ENCODE measurements at regions of chr10 and their contacts with region 1.

Region 1: DNA sequence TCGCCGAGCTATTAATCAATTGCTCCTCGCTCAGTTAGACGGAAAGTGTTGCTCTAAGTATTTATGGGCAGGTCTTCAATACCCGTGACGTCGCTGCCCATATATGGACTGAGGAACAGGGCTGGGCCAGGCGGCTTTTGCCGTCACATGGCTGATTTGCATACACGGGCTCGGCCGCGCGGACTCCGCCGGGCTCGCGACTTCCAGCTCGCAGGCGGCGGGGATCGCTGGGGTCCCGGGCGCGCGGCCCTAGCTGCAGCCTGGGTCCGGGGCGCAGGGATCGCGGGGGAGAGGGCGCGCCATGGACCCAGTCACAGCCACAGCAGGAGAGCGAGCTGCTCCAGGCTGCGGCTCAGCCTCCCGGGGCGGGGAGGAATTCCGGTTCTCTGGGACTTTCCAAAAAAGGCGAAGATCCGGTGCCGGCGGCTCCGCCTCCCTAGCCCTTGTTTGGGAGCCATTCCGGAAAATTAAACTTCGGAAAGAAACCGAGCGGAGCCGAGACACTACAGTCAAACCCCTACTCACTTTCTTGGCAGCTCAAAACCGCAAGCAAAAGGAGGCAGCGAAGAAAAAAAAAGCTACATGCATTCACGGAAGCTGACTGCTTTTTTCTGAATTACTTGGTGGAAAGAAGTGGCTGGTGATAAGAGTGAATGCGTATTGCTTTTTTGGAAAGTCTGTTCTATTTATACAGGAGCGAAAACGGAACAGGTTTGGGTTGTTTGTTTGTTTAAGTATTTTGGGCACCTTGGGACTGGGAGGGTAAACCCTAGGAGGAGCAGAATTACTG is at the start of gene EGR2:
- DNase-seq: peak; percentile 93
- CTCF ChIP-seq: no peak

Region 2: DNA sequence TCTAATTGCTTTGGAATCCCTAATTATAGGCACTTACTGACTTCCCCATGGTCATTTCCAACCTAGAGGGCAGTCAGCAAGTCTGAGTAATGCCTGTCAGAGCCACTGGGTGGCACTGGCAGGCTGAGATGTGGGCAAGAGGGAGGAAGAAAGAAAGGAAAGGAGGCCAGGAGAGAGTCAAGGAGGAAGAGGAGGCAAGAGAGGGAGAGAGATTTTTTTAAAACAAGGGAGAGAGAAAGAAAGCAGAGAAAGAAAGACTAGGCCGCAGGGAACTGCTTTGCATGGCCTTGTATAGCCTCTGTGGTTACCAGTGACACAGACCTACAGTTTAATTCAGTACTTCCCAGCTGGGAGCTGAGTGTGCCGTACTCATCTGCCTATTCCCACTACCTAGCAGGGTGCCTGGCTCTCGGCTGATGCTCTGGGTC is 222.4 kb before region 1 on chr10:
- CTCF ChIA-PET with region 1: interaction called, 59 read pairs
- POLR2A ChIA-PET with region 1: no interaction called
- DNase-seq: peak; percentile 54
- CTCF ChIP-seq: peak; percentile 98

Region 3: DNA sequence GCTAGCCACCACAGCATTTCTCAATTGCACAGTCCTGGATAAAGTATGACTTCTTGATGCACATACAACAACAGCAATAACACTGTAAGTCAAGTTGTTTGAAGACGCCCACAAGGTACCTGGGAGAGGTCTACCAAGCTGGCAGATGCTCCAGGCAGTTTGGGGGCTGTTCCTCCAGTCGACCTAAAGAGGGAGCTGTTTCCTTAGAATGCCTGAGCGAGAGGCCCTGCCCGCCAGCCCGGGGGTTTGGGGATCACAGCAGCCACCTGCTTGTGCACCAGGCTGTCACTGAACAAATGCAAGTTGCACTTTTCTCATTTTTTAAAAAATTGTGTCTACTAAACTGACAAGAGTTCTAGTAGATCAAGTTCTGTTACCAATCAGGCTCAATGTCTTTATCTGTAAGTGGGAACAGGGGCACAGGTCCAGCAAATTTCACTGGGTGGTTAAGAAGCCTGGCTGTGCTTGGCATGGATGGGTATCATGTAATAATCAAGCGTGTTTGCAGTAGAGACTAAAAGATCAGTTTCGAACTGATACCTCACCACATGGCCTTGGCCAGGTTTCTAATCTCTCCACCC is 205.8 kb before region 1 on chr10:
- CTCF ChIA-PET with region 1: interaction called, 239 read pairs
- POLR2A ChIA-PET with region 1: interaction called, 3 read pairs
- DNase-seq: peak; percentile 88
- CTCF ChIP-seq: peak; percentile 86

Region 4: GRCh38 chr10:62732841-62733653 is 83.5 kb before region 1 on chr10:
- CTCF ChIA-PET with region 1: interaction called, 16 read pairs
- POLR2A ChIA-PET with region 1: interaction called, 9 read pairs
- DNase-seq: peak; percentile 64
- CTCF ChIP-seq: no peak

Region 5: GRCh38 chr10:62831346-62831745 is 14.8 kb after region 1 on chr10:
- CTCF ChIA-PET with region 1: interaction called, 67 read pairs
- POLR2A ChIA-PET with region 1: interaction called, 9 read pairs
- DNase-seq: no peak
- CTCF ChIP-seq: no peak

Region 6: DNA sequence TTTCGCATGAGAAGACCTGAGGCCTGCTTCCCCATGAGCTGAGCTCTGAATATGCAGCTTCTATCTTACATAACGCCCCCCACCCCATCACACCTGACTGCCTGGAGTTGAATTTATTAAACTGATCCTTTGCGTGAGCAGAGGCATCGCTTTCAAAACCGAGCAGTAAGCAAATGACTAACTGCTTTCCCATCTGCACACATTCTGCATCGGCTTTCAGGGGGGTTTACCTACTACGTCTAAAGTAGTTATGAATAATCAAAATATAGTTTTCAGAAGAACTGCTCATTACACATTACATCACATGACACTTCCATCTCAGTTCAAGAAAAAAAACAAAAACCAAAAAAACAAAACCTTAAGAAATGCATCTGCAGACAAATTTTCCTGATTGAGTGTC is 54.3 kb after region 1 on chr10:
- CTCF ChIA-PET with region 1: interaction called, 13 read pairs
- POLR2A ChIA-PET with region 1: no interaction called
- DNase-seq: peak; percentile 65
- CTCF ChIP-seq: no peak

Region 7: GRCh38 chr10:63120554-63120953 is 304.0 kb after region 1 on chr10:
- CTCF ChIA-PET with region 1: no interaction called
- POLR2A ChIA-PET with region 1: no interaction called
- DNase-seq: no peak
- CTCF ChIP-seq: no peak